ENCODE measurements at regions of chr15 and their contacts with region 1.

Region 1: DNA sequence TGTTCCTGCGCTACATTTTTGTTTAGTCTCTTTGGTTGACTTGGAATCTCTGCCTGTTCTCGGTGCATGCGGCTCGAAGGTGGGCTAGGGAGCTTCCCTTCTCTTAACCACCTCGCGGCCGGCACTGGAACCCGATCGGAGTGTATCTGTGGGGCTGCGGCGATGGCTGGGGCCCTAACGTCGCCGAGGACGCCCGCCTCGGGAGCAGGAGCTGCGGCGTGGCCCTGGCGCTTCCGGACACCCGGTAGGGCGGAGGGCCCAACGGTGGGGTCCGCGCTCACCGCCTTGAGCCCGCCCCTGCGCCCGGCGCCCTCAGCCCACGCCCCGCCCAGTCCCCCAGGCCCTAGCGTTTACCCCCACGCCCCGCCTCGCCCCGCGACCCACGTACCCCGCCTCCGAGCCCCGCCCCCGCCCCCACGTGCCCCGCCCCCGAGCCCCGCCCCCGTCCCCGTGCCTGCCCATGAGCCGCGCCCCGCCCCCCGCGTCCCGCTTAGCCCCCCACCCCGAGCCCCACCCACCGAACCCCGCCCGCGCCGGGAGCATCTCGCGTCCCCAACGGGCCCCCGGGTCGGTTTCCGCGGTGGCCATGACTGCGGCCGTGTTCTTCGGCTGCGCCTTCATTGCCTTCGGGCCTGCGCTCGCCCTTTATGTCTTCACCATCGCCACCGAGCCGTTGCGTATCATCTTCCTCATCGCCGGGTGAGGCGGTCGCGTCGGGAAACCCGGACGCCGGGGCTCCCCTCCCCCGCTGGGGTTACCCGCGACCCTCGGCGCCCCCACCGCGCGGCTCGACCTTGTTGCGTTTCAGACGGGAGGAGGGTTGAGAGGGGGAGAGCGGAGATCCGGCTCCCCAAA is at the start of gene APH1B:
- DNase-seq: peak; percentile 63
- H3K4me3 Mint-ChIP-seq: peak within 1 kb of the TSS; percentile 89
- H3K27ac Mint-ChIP-seq: peak within 1 kb of the TSS; percentile 75
- H3K4me1 Mint-ChIP-seq: peaks cover 33% of the 10 kb centered on the region
- H3K27me3 Mint-ChIP-seq: no peaks in the 10 kb centered on the region
- total RNA-seq, gene APH1B: 6.7 to 8.6 TPM

Region 2: DNA sequence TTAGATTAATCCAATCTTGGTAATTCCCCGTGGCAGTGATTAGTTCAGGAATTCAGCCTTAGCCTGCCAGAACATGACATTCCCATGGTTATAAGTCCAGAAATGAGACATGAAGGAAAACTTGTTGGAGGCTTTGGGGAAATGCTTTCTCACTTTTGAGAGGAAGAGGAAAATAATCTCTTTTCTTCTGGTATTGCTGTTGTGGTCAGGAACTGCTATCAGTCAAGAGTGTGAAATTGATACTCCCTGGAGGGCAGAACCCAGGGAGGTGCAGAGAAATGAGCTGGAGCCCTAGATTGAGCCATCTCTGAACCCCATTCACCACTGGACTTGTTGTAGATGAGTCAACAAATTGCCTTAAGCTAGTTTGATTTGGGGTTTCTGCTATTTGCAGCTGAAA is 38.5 kb before region 1 on chr15:
- CTCF ChIA-PET with region 1: interaction called, 3 read pairs
- intact Hi-C with region 1: loop called (anchors 5 kb)
- DNase-seq: peak; percentile 48
- H3K4me3 Mint-ChIP-seq: no peak overlapping the region
- H3K27ac Mint-ChIP-seq: no peak overlapping the region
- H3K4me1 Mint-ChIP-seq: peaks cover 72% of the 10 kb centered on the region
- H3K27me3 Mint-ChIP-seq: no peaks in the 10 kb centered on the region

Region 3: DNA sequence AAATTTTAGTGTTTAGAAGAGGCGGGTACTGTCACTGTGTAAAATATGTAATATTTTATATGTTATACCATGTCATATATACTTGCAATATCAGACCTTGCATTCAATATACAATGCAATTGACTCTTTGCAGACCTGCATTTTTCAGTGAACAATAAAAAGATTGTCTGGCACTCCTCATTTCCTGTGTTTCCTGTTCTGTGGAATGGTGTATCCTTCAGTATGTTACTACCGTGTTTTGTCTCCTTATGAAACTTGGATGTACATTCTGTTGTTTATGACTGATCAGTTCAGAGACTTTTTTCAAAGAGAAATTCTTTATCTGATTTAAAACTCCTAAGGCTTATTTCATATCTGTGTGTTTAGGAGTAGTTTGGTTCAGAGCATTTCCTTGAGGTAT is 31.7 kb after region 1 on chr15:
- CTCF ChIA-PET with region 1: no interaction called
- intact Hi-C with region 1: no loop called
- DNase-seq: no peak
- H3K4me3 Mint-ChIP-seq: no peak overlapping the region
- H3K27ac Mint-ChIP-seq: no peak overlapping the region
- H3K4me1 Mint-ChIP-seq: no peaks in the 10 kb centered on the region
- H3K27me3 Mint-ChIP-seq: no peaks in the 10 kb centered on the region

Measured in activated naive CD4-positive, alpha-beta T cell treated with anti-CD3 and anti-CD28 coated beads for 36 hours (primary cell).